Ovary (tissue), 10 donors: ENCODE measurements at regions of chr21 and their contacts with region 1.

Region 1: DNA sequence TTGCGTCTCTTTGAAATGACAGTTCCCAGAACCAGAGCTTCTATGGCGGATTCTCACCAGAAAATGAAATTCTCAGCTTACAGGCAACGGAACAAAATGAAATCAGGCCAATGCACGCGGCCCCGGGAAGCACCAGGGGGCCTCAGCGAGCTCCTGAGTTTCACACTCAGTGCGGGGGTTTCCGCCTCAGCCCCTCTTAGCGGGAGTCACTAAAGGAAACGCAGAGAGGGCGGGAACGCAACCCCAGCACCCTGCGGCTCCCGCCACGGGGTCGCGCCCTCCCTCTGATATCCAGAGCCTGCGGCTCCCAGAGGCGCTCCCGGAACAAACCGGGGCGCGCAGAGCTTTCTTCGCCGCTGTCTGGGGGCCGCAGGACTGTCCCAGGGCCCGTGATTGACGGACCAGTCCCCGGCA is 7.9 kb upstream of the COL6A1 start:
- DNase-seq: peak; percentile 87 to 93 (median 90)
- H3K4me3 ChIP-seq: peak overlapping the region; percentile 59
- H3K27ac ChIP-seq: peak overlapping the region; percentile 86 to 94
- H3K4me1 ChIP-seq: peaks cover 37% of the 10 kb centered on the region
- H3K27me3 ChIP-seq: no peaks in the 10 kb centered on the region
- CTCF ChIP-seq: peak; percentile 64 to 83 (median 71)
- EP300 ChIP-seq: no peak
- POLR2A ChIP-seq: peak; percentile 43

Region 2: DNA sequence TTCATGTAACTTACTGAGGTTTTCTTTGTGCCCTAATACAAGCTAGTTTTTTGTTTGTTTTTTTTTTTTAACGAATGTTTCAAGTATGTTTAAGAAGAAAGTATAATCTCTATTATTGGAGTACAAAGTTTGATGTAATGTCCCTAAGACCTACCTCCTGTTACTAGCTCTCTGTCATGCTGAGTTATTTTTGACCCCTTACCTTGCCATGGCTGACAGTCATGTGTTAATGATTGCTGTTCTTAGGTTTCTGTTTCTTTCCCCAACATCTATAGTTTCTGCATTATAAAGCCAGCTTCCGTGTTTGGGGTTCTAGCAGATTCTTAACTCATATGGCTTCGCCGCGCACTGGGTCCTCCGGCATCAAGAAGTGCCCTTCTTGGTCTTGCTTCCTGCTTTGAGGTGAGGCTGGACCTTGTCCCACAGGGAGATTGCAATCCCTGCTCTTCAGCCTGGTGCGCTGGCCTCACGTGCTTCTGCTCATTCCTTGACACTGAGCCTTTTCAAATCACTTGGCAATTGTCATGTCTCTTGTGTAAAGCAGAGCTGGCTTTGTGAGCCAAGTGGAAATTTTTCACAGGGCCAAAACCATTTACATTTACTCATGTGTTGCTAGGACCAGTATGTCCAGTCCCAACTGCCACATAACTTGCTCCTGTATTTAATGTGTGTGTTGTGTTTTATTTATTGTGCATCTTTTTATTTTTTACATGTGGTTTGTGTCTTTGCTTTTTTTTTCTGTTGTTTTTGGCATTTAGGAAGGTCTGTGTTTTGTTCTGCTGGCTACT is 127.1 kb before region 1 on chr21:
- intact Hi-C with region 1: no loop called
- DNase-seq: peak in 1 of 5 donors; percentile 18
- H3K4me3 ChIP-seq: no peak overlapping the region
- H3K27ac ChIP-seq: no peak overlapping the region
- H3K4me1 ChIP-seq: no peaks in the 10 kb centered on the region
- H3K27me3 ChIP-seq: no peaks in the 10 kb centered on the region
- CTCF ChIP-seq: no peak
- EP300 ChIP-seq: no peak
- POLR2A ChIP-seq: no peak

Region 3: GRCh38 chr21:46056450-46056903 is 82.8 kb after region 1 on chr21:
- intact Hi-C with region 1: loop called in 1 of 4 experiments (anchors 10 kb)
- DNase-seq: peak; percentile 94 to 97 (median 95)
- H3K4me3 ChIP-seq: no peak overlapping the region
- H3K27ac ChIP-seq: peak overlapping the region; percentile 92 to 98
- H3K4me1 ChIP-seq: peaks cover 30% of the 10 kb centered on the region
- H3K27me3 ChIP-seq: no peaks in the 10 kb centered on the region
- CTCF ChIP-seq: no peak
- EP300 ChIP-seq: peak; percentile 79
- POLR2A ChIP-seq: peak; percentile 59

Region 4: GRCh38 chr21:46097336-46098293 is 123.9 kb after region 1 on chr21 and contains the start of gene COL6A2:
- intact Hi-C with region 1: loop called (anchors 2 to 5 kb)
- DNase-seq: peak; percentile 79 to 89 (median 85)
- H3K4me3 ChIP-seq: peak within 1 kb of the TSS; percentile 76
- H3K27ac ChIP-seq: peak within 1 kb of the TSS; percentile 75 to 94
- H3K4me1 ChIP-seq: peaks cover 7% of the 10 kb centered on the region
- H3K27me3 ChIP-seq: no peaks in the 10 kb centered on the region
- CTCF ChIP-seq: peak; percentile 16 to 53 (median 28)
- EP300 ChIP-seq: no peak
- POLR2A ChIP-seq: peak; percentile 85
- total RNA-seq, gene COL6A2: 222 to 1,092 (median 831) TPM

Region 5: GRCh38 chr21:46110499-46111192 is 137.0 kb after region 1 on chr21:
- intact Hi-C with region 1: loop called in 2 of 4 experiments (anchors 5 kb)
- DNase-seq: peak; percentile 67 to 80 (median 70)
- H3K4me3 ChIP-seq: no peak overlapping the region
- H3K27ac ChIP-seq: peak overlapping the region in 1 of 2 donors; percentile 39
- H3K4me1 ChIP-seq: peaks cover 11% of the 10 kb centered on the region
- H3K27me3 ChIP-seq: no peaks in the 10 kb centered on the region
- CTCF ChIP-seq: peak in 2 of 3 donors; percentile 17 to 47
- EP300 ChIP-seq: no peak
- POLR2A ChIP-seq: no peak

Region 6: DNA sequence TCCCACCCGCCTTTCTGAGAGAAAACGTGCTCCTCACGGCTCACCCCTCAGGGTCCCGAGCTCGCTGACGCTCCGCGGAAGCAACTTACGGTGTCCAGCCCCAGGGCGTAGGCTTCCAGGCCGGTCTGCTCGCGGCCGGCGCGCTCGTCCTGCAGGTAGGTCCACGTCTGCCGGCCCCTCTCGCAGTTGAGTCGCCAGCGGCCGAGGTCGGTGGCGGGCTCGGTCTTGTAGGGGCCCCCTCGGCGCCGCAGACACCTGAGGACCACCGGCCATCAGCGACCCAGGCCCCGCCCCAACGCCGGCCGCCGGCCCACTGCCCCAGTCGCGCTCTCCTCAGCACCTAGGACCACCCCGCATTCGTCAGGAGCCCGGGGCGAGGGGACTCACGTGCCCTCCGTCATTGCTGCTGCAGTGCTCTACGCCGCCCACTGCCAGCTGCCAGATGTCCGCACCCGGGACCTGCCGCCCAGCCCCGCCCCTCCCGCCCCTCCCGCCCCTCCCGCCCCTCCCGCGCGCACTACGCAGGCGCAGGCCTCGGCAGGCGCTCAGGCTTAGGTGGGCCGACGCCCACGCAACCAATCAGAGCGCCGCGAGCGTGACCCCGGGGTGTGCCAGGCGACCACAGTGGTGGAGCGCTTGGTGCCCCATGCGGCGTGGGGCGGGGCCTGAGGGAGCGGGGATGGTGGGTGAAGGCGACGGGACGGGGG is 254.8 kb after region 1 on chr21 and contains the start of gene LSS:
- intact Hi-C with region 1: loop called in 1 of 4 experiments (anchors 5 kb)
- DNase-seq: peak; percentile 96 to 99 (median 98)
- H3K4me3 ChIP-seq: peak within 1 kb of the TSS; percentile 67
- H3K27ac ChIP-seq: peak within 1 kb of the TSS; percentile 77 to 81
- H3K4me1 ChIP-seq: peaks cover 13% of the 10 kb centered on the region
- H3K27me3 ChIP-seq: no peaks in the 10 kb centered on the region
- CTCF ChIP-seq: peak in 1 of 3 donors; percentile 15
- EP300 ChIP-seq: no peak
- POLR2A ChIP-seq: no peak
- total RNA-seq, gene LSS: 33.2 to 201 (median 80.9) TPM